CD8-positive, alpha-beta T cell (primary cell): ENCODE measurements at regions of chr14 and their contacts with region 1.

Region 1: GRCh38 chr14:64986578-64987571 is at the start of gene FNTB:
- DNase-seq: peak; percentile 85 to 98 (median 93)
- ATAC-seq: peak; percentile 89
- H3K4me3 ChIP-seq: peak within 1 kb of the TSS; percentile 78 to 79
- H3K4me3 Mint-ChIP-seq: peak within 1 kb of the TSS; percentile 99
- H3K27ac ChIP-seq: peak within 1 kb of the TSS; percentile 57 to 73
- H3K27ac Mint-ChIP-seq: peak within 1 kb of the TSS; percentile 98
- H3K4me1 ChIP-seq: peaks cover 44% of the 10 kb centered on the region
- H3K4me1 Mint-ChIP-seq: peaks cover 55% of the 10 kb centered on the region
- H3K27me3 ChIP-seq: no peaks in the 10 kb centered on the region
- H3K27me3 Mint-ChIP-seq: peaks cover 7% of the 10 kb centered on the region
- CTCF ChIP-seq: peak; percentile 68
- total RNA-seq, gene FNTB: 6.3 to 7.7 TPM

Region 2: DNA sequence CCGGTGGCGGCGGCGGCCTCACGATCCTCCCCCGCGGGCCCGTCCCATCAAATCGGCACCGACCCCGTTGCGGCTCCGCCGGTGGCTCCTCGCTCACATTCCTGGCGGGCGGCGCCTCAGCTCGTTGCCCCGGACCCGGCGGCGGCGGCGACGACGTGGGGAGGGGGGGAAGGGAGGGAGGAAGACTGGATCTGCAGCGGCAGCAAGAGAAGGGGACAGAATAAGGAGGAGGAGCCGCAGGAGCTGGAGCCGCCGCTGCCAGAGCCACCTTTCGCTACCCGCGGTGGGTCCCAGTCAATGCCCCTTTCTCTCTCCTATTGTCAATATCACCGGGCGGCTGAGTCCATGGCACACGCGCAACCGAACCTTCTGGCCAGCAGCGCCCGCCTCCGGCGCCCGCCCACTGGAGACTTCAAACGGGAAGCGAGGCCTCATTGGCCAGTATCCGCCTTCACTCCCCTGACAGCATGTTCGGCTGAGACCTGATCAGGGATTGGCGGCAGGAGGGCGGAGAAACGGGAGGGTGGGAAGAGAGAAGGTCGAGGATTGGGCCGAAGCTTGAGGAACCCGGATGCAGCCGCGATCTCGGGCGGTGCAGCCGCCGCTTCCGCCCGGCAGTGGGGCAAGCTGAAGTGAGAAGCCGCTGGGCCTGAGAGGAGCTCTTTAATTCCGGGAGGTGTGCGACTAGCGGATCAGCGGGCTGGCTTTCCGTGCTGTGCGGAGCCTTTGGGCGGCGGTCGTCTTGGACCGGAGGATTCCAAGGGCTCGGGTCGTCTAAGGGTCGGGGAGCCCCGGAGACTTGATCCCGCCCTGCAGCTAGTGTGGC is 1443.7 kb before region 1 on chr14 and contains the start of gene PPP2R5E:
- CTCF ChIA-PET with region 1: no interaction called
- POLR2A ChIA-PET with region 1: no interaction called
- intact Hi-C with region 1: loop called (anchors 2 to 5 kb)
- DNase-seq: peak; percentile 95 to 99 (median 97)
- ATAC-seq: peak; percentile 96
- H3K4me3 ChIP-seq: peak within 1 kb of the TSS; percentile 75 to 98
- H3K4me3 Mint-ChIP-seq: peak within 1 kb of the TSS; percentile 98
- H3K27ac ChIP-seq: peak within 1 kb of the TSS; percentile 71 to 91
- H3K27ac Mint-ChIP-seq: peak within 1 kb of the TSS; percentile 93
- H3K4me1 ChIP-seq: peaks cover 17% of the 10 kb centered on the region
- H3K4me1 Mint-ChIP-seq: peaks cover 33% of the 10 kb centered on the region
- H3K27me3 ChIP-seq: no peaks in the 10 kb centered on the region
- H3K27me3 Mint-ChIP-seq: no peaks in the 10 kb centered on the region
- CTCF ChIP-seq: no peak
- total RNA-seq, gene PPP2R5E: 33.5 to 35.9 TPM

Region 3: DNA sequence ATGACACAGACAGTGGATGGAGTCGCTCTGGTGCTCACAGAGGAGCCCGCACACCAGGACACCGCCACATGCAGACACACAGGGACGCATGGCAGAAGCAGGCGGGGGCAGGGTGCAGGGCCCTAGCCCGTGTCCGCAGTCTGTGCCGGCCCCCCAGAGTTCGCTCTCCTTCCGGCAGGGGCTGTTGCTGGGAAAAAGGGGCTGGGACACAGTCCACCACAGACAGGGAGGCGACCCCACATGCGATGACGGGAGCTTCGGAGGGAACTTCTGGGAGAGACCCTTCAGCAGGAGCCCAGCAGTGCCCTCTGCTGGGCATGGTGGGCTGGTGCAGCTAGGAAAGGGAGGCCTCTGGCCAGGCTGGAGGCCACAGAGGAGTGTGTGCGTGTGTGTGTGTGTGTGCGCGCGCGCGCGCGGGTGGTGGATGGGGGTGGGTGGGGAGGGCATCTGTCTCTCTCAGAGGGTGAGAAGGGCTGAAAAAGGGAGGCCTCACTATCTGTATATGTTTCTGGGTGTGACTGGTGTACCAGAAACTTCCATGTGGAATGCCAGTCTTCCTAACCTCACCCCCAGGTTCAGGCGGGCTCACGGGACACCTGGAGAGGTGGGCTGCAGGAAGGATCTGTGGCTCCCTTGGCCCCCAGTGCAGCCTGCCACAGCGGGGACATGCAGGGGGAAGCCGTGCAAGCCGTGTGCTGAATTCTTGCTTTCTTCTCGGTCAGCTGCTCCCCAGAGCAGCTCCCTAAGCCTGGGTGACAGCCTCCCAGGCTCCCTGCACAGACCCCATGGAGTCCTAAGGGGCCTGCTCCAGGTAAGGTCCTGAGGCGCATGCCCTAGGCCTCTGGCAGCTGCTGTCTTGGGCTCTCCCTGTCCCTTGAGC is 222.0 kb before region 1 on chr14:
- CTCF ChIA-PET with region 1: no interaction called
- POLR2A ChIA-PET with region 1: no interaction called
- intact Hi-C with region 1: loop called in 1 of 2 experiments (anchors 5 kb)
- DNase-seq: peak; percentile 38 to 82 (median 60)
- ATAC-seq: peak; percentile 91
- H3K4me3 ChIP-seq: peak overlapping the region in 1 of 2 experiments; percentile 28
- H3K4me3 Mint-ChIP-seq: peak overlapping the region; percentile 50
- H3K27ac ChIP-seq: no peak overlapping the region
- H3K27ac Mint-ChIP-seq: no peak overlapping the region
- H3K4me1 ChIP-seq: peaks cover 5% of the 10 kb centered on the region
- H3K4me1 Mint-ChIP-seq: peaks cover 14% of the 10 kb centered on the region
- H3K27me3 ChIP-seq: no peaks in the 10 kb centered on the region
- H3K27me3 Mint-ChIP-seq: no peaks in the 10 kb centered on the region
- CTCF ChIP-seq: peak; percentile 79

Region 4: GRCh38 chr14:64841121-64841651 is 145.7 kb before region 1 on chr14:
- CTCF ChIA-PET with region 1: no interaction called
- POLR2A ChIA-PET with region 1: no interaction called
- intact Hi-C with region 1: no loop called
- DNase-seq: no peak
- ATAC-seq: no peak
- H3K4me3 ChIP-seq: no peak overlapping the region
- H3K4me3 Mint-ChIP-seq: no peak overlapping the region
- H3K27ac ChIP-seq: no peak overlapping the region
- H3K27ac Mint-ChIP-seq: no peak overlapping the region
- H3K4me1 ChIP-seq: no peaks in the 10 kb centered on the region
- H3K4me1 Mint-ChIP-seq: no peaks in the 10 kb centered on the region
- H3K27me3 ChIP-seq: no peaks in the 10 kb centered on the region
- H3K27me3 Mint-ChIP-seq: peaks cover 31% of the 10 kb centered on the region
- CTCF ChIP-seq: no peak

Region 5: DNA sequence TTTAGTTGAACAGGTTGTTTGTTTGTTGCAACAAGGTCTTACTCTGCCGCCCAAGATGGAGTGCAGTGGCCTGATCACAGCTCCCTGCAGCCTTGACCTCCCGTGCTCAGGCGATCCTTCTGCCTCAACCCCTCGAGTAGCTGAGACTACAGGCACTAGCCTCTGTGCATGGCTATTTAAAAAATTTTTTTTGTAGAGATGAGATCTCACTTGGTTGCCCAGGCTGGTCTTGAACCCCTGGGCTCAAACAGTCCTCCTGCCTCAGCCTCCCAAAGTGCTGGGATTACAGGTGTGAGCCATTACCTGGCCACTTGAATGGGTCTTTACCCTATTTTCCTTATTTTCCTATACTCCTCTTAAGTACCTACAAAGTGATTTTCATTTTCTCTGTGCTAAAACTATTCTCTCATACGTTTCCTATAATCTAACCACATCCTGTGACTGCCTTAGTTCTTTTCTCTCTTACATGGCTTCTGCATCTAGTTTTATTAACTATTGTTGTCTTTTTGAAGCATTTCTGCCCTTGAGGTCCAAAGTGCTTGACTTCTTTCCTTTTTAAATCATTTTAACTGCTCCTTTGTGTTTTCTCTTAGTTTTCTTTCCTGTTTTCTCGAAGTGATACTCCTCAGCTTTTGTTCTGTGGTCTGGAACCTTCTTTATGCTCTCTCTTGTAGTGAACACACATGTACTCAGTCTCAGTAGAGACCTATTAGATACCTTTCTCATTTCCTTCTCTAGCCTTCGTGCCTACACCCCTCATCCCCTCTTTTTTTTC is 58.4 kb before region 1 on chr14:
- CTCF ChIA-PET with region 1: interaction called, 5 read pairs
- POLR2A ChIA-PET with region 1: no interaction called
- intact Hi-C with region 1: loop called in 1 of 2 experiments (anchors 5 kb)
- DNase-seq: peak in 2 of 9 experiments; percentile 34 to 65
- ATAC-seq: peak; percentile 81
- H3K4me3 ChIP-seq: peak overlapping the region; percentile 0 to 26
- H3K4me3 Mint-ChIP-seq: no peak overlapping the region
- H3K27ac ChIP-seq: peak overlapping the region; percentile 49 to 79
- H3K27ac Mint-ChIP-seq: no peak overlapping the region
- H3K4me1 ChIP-seq: peaks cover 66% of the 10 kb centered on the region
- H3K4me1 Mint-ChIP-seq: peaks cover 28% of the 10 kb centered on the region
- H3K27me3 ChIP-seq: no peaks in the 10 kb centered on the region
- H3K27me3 Mint-ChIP-seq: no peaks in the 10 kb centered on the region
- CTCF ChIP-seq: no peak

Region 6: GRCh38 chr14:65102441-65103149 is 115.7 kb after region 1 on chr14 and contains the start of gene MAX:
- CTCF ChIA-PET with region 1: interaction called, 3 read pairs
- POLR2A ChIA-PET with region 1: interaction called, 8 read pairs
- intact Hi-C with region 1: loop called (anchors 1 kb)
- DNase-seq: peak; percentile 96 to 99 (median 98)
- ATAC-seq: peak; percentile 82
- H3K4me3 ChIP-seq: peak within 1 kb of the TSS; percentile 81 to 97
- H3K4me3 Mint-ChIP-seq: peak within 1 kb of the TSS; percentile 88
- H3K27ac ChIP-seq: peak within 1 kb of the TSS; percentile 91 to 95
- H3K27ac Mint-ChIP-seq: peak within 1 kb of the TSS; percentile 96
- H3K4me1 ChIP-seq: peaks cover 35% of the 10 kb centered on the region
- H3K4me1 Mint-ChIP-seq: peaks cover 41% of the 10 kb centered on the region
- H3K27me3 ChIP-seq: no peaks in the 10 kb centered on the region
- H3K27me3 Mint-ChIP-seq: no peaks in the 10 kb centered on the region
- CTCF ChIP-seq: no peak
- total RNA-seq, gene MAX: 143 to 153 TPM

Region 7: DNA sequence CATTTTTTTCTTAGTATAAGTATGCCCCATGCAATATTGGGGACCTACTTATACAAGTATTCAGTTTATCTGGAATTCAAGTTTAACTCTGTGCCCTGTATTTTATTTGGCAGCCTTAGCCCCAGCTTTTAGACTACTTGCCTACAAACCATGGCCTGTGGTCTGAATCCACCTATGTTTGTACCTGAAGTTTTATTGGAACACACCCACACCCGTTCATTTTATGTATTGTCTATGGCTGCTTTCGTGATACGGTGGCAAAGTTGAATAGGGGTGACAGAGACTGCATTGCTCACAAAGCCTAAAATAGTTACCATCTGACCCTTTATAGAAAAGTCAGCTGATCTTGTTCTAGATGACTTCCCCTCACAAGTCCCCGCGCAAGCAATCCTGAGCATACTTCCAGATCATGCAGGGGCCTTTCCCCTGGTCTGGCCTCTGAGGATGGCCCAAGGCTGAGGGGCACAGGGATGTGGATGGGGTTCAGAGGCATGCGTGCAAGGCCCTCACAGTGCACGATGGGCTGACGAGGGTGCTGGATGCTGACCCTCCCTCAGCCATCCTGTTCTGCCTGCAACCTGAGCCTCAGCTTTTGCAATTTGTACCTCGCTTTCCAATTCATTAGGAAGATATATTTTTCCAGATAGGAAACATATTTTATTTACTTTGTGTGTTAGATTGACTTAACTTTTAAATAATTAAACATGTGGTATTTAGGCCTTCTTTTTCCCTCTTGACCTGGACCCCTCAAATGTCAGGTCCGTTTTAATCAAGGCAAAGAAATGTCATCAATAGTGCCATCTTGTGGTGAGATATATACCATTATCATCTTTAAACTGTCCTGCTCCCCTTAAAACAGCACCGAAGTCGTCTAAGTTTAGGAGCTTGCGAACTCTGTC is 972.0 kb after region 1 on chr14:
- CTCF ChIA-PET with region 1: interaction called, 4 read pairs
- POLR2A ChIA-PET with region 1: no interaction called
- intact Hi-C with region 1: loop called in 1 of 2 experiments (anchors 5 kb)
- DNase-seq: peak in 2 of 9 experiments; percentile 55 to 69
- ATAC-seq: peak; percentile 57
- H3K4me3 ChIP-seq: no peak overlapping the region
- H3K4me3 Mint-ChIP-seq: no peak overlapping the region
- H3K27ac ChIP-seq: no peak overlapping the region
- H3K27ac Mint-ChIP-seq: no peak overlapping the region
- H3K4me1 ChIP-seq: peaks cover 19% of the 10 kb centered on the region
- H3K4me1 Mint-ChIP-seq: peaks cover 26% of the 10 kb centered on the region
- H3K27me3 ChIP-seq: no peaks in the 10 kb centered on the region
- H3K27me3 Mint-ChIP-seq: no peaks in the 10 kb centered on the region
- CTCF ChIP-seq: peak; percentile 83